Activated CD4-positive, alpha-beta T cell treated with anti-CD3 and anti-CD28 coated beads for 36 hours (primary cell): ENCODE measurements at regions of chr9 and their contacts with region 1.

Region 1: GRCh38 chr9:125407974-125408900 is 146.6 kb downstream of the GAPVD1 start:
- DNase-seq: peak; percentile 89
- ATAC-seq: peak; percentile 76
- H3K4me3 Mint-ChIP-seq: peak overlapping the region; percentile 62
- H3K27ac Mint-ChIP-seq: no peak overlapping the region
- H3K4me1 Mint-ChIP-seq: peaks cover 13% of the 10 kb centered on the region
- H3K27me3 Mint-ChIP-seq: peaks cover 27% of the 10 kb centered on the region

Region 2: GRCh38 chr9:126293522-126293889 is 885.3 kb after region 1 on chr9:
- CTCF ChIA-PET with region 1: no interaction called
- POLR2A ChIA-PET with region 1: no interaction called
- intact Hi-C with region 1: loop called in 1 of 2 experiments (anchors 5 kb)
- DNase-seq: peak; percentile 34
- ATAC-seq: no peak
- H3K4me3 Mint-ChIP-seq: no peak overlapping the region
- H3K27ac Mint-ChIP-seq: no peak overlapping the region
- H3K4me1 Mint-ChIP-seq: no peaks in the 10 kb centered on the region
- H3K27me3 Mint-ChIP-seq: peaks cover 7% of the 10 kb centered on the region